Activated CD8-positive, alpha-beta memory T cell treated with anti-CD3 and anti-CD28 coated beads, Interleukin-2, amount 10 ng/mL, durations not matched to agents 7 days and 5 days (primary cell): ENCODE measurements at regions of chr6 and their contacts with region 1.

Region 1: GRCh38 chr6:42043787-42044475 is 6.4 kb upstream of the TAF8 start:
- DNase-seq: peak; percentile 95
- ATAC-seq: peak; percentile 60
- H3K4me3 Mint-ChIP-seq: peak overlapping the region; percentile 61
- H3K27ac Mint-ChIP-seq: peak overlapping the region; percentile 95
- H3K4me1 Mint-ChIP-seq: peaks cover 89% of the 10 kb centered on the region
- H3K27me3 Mint-ChIP-seq: no peaks in the 10 kb centered on the region

Region 2: DNA sequence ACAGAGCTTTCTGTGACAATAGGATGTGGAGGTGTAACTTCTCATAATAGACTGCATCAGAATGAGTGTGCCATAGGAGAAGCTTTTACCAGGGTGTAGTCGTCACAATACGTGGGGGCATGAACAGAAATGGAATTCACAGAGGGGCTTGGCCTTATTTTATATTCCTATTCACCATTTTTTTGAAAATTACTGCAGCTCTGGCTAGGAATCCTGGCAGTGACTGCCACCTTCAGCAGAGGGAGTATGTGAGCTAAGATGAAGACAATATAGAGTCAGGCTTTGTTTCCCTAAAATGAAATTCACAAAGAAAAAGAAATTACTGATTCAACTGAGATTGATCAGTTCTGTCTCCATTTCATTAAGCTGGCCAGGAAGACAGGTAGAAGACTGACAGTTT is 242.6 kb before region 1 on chr6:
- CTCF ChIA-PET with region 1: interaction called, 340 read pairs
- DNase-seq: no peak
- ATAC-seq: peak; percentile 23
- H3K4me3 Mint-ChIP-seq: no peak overlapping the region
- H3K27ac Mint-ChIP-seq: no peak overlapping the region
- H3K4me1 Mint-ChIP-seq: peaks cover 10% of the 10 kb centered on the region
- H3K27me3 Mint-ChIP-seq: no peaks in the 10 kb centered on the region

Region 3: GRCh38 chr6:41846666-41847237 is 197.2 kb before region 1 on chr6:
- CTCF ChIA-PET with region 1: interaction called, 108 read pairs
- DNase-seq: peak; percentile 71
- ATAC-seq: peak; percentile 90
- H3K4me3 Mint-ChIP-seq: no peak overlapping the region
- H3K27ac Mint-ChIP-seq: peak overlapping the region; percentile 22
- H3K4me1 Mint-ChIP-seq: peaks cover 9% of the 10 kb centered on the region
- H3K27me3 Mint-ChIP-seq: no peaks in the 10 kb centered on the region

Region 4: GRCh38 chr6:41895300-41896233 is 148.4 kb before region 1 on chr6 and contains the start of gene USP49:
- CTCF ChIA-PET with region 1: interaction called, 31 read pairs
- DNase-seq: peak; percentile 94
- ATAC-seq: peak; percentile 98
- H3K4me3 Mint-ChIP-seq: no peak within 1 kb of the TSS
- H3K27ac Mint-ChIP-seq: peak within 1 kb of the TSS; percentile 75
- H3K4me1 Mint-ChIP-seq: peaks cover 9% of the 10 kb centered on the region
- H3K27me3 Mint-ChIP-seq: peaks cover 4% of the 10 kb centered on the region
- total RNA-seq, gene USP49: 7.7 to 9.1 TPM

Region 5: DNA sequence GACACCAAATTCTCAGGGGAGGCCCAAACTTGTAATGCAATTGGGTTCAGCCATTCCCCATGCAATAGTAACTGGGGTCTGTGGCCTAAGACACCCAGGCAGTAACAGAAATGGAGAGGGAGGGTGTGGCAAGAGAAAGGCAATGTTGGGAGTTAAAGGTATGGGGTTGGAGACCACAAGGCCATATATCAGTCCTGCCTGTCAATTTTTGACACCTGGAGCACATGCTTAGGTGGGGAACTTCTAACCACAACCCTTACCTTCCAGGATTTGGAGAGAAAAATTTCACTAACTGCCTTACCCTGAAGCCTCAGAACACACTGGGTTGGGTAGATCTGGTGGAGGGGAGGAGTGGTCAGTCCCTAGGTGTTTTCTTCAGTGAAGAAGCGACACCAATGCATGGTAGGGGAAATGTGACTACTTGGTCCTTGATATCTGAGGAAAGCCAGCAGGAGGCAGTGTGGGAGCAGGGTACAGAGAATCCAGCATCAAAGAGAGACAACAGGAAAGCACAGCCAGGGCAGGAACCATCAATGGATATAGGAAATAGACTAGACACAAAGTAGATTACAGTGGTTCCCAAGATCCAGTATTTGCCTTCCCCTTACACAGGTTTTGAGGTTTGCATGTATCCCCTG is 141.9 kb before region 1 on chr6:
- CTCF ChIA-PET with region 1: interaction called, 31 read pairs
- DNase-seq: peak; percentile 67
- ATAC-seq: peak; percentile 57
- H3K4me3 Mint-ChIP-seq: no peak overlapping the region
- H3K27ac Mint-ChIP-seq: peak overlapping the region; percentile 41
- H3K4me1 Mint-ChIP-seq: peaks cover 15% of the 10 kb centered on the region
- H3K27me3 Mint-ChIP-seq: no peaks in the 10 kb centered on the region

Region 6: DNA sequence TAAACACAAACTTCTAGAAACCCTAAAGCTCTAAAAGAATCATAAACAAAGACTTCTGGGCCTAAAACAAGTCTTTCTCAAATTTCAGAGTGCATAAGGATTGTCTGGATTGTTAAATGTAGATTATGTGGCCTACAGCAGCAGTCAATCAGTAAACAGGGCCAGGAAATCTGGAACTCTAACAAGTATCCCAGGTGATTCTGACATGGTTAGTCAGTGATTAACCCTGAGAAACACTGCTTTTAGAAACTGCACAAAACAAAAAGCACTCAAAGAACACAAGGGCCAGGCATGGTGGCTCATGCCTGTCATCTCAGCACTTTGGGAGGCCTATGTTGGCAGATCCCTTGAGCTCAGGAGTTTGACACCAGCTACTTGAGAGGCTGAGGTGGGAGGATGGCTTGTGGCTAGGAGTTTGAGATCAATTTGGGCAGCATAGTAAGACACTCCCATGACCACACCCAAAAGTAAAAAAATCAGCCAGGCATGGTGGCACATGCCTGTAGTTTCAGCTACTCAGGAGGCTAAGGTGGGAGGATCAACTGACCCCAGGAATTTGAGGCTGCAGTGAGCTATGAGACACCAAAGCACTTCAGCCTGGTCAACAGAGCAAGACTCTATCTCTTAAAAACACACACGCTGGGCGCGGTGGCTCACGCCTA is 128.9 kb before region 1 on chr6:
- CTCF ChIA-PET with region 1: interaction called, 184 read pairs
- DNase-seq: no peak
- ATAC-seq: no peak
- H3K4me3 Mint-ChIP-seq: no peak overlapping the region
- H3K27ac Mint-ChIP-seq: peak overlapping the region; percentile 43
- H3K4me1 Mint-ChIP-seq: peaks cover 38% of the 10 kb centered on the region
- H3K27me3 Mint-ChIP-seq: no peaks in the 10 kb centered on the region

Region 7: GRCh38 chr6:42017021-42017643 is 26.8 kb before region 1 on chr6:
- CTCF ChIA-PET with region 1: interaction called, 17 read pairs
- DNase-seq: peak; percentile 74
- ATAC-seq: peak; percentile 82
- H3K4me3 Mint-ChIP-seq: peak overlapping the region; percentile 22
- H3K27ac Mint-ChIP-seq: peak overlapping the region; percentile 91
- H3K4me1 Mint-ChIP-seq: peaks cover 68% of the 10 kb centered on the region
- H3K27me3 Mint-ChIP-seq: no peaks in the 10 kb centered on the region

Region 8: DNA sequence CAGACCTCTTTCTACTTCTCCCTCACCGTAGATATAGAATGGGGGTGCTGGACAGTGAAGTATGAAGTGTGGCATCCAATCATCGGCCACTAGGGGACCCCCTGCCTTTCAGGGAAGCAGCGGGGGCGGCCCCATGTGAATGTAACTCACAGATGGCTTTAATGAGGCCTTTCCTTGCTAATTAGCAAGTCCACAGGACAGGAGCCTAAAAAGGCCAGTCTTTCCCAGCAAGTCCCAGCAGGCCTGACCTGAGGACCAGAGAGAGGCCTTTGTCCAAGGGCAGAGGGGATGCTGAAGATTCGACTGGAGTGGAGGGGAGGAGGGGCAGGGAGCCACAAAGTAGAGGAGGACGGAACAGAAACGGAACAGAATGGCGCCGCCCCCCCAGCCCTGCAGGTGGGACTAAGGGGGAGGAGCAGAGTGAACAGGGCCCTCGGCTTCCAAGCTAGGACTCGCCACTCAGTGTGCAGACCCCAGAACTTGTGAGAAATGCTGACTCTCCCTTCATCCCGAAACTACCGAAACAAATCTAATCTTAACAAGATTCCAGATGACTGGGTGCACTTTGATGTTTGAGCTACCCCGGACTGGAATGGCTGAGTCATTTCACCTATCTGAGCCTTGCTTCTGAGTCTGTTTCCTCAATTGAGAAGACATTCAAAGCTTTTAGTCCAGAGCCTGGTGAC is 92.7 kb after region 1 on chr6:
- CTCF ChIA-PET with region 1: no interaction called
- DNase-seq: peak; percentile 49
- ATAC-seq: peak; percentile 61
- H3K4me3 Mint-ChIP-seq: no peak overlapping the region
- H3K27ac Mint-ChIP-seq: no peak overlapping the region
- H3K4me1 Mint-ChIP-seq: peaks cover 4% of the 10 kb centered on the region
- H3K27me3 Mint-ChIP-seq: peaks cover 12% of the 10 kb centered on the region